ENCODE measurements at regions of chr11 and their contacts with region 1.

Region 1: GRCh38 chr11:47552566-47553416 is at the start of gene CELF1:
- DNase-seq: peak; percentile 87 to 94 (median 92)
- ATAC-seq: peak; percentile 88 to 94
- H3K4me3 Mint-ChIP-seq: peak within 1 kb of the TSS; percentile 94 to 98 (median 96)
- H3K27ac Mint-ChIP-seq: peak within 1 kb of the TSS; percentile 90 to 98 (median 97)
- H3K4me1 Mint-ChIP-seq: peaks cover 17 to 49% (median 43%) of the 10 kb centered on the region in 4 donors
- H3K27me3 Mint-ChIP-seq: no peaks in the 10 kb centered on the region
- polyA plus RNA-seq, gene CELF1: 45.3 to 79.3 (median 55.3) TPM

Region 2: GRCh38 chr11:47415949-47416472 is 136.8 kb before region 1 on chr11:
- POLR2A ChIA-PET with region 1: no interaction called
- DNase-seq: no peak
- ATAC-seq: no peak
- H3K4me3 Mint-ChIP-seq: no peak overlapping the region
- H3K27ac Mint-ChIP-seq: no peak overlapping the region
- H3K4me1 Mint-ChIP-seq: peaks cover 0 to 5% (median 2%) of the 10 kb centered on the region in 4 donors
- H3K27me3 Mint-ChIP-seq: no peaks in the 10 kb centered on the region

Region 3: DNA sequence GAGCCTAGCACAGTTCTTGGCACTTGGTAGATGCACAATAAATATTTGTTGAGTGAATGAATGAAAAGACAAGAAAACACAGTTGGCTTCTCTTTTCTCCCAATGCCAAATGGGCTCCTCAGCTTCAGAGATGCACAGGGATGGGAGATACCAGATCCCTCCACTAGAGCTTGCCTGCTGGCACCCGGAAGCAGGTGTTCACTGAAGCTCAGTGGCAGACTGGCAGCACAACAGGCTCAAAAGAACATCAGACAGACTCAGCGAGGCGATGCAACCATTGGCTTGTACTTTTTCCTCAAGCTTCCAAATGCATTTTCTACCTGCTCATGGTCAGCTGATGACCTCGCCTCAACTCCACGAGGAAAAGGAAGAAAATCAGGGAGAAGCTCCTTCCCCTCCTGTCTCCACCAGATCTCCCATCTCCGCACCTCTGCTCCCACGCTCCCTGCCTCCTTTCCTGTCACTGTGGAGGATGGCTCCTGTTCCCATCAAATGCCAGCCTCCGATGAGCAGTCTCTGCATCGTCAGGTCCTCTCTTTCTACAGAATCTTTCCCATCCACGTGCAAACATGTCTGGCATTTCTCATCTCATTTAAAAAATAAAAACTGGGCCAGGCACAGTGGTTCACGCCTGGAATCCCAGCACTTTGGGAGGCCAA is 109.6 kb before region 1 on chr11:
- POLR2A ChIA-PET with region 1: no interaction called
- DNase-seq: no peak
- ATAC-seq: peak in 1 of 2 donors; percentile 53
- H3K4me3 Mint-ChIP-seq: peak overlapping the region in 3 of 10 donors; percentile 5 to 37 (median 24)
- H3K27ac Mint-ChIP-seq: peak overlapping the region in 4 of 10 donors; percentile 29 to 86 (median 52)
- H3K4me1 Mint-ChIP-seq: peaks cover 0 to 9% (median 4%) of the 10 kb centered on the region in 4 donors
- H3K27me3 Mint-ChIP-seq: no peaks in the 10 kb centered on the region

Region 4: DNA sequence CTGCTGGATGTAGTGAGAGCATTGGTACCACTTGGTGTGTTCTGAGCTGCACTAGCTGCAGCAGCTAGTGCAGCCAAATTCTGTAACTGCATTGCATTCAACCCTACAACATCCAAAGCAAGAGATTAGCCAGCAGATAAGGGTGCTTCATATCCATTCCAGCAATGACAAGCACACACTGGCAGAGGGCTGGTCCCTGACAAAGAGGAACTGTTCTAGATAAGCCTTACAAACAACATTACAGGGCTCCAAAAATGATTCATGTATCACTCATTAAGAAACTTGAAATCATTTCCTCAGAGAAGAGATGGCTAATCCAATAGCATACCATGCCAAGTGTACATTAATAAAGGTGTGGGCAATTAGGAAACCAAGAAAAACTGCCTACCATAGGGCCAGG is 75.5 kb before region 1 on chr11:
- POLR2A ChIA-PET with region 1: no interaction called
- DNase-seq: no peak
- ATAC-seq: no peak
- H3K4me3 Mint-ChIP-seq: no peak overlapping the region
- H3K27ac Mint-ChIP-seq: peak overlapping the region in 5 of 10 donors; percentile 27 to 63 (median 34)
- H3K4me1 Mint-ChIP-seq: peaks cover 0 to 5% (median 1%) of the 10 kb centered on the region in 4 donors
- H3K27me3 Mint-ChIP-seq: no peaks in the 10 kb centered on the region

Region 5: DNA sequence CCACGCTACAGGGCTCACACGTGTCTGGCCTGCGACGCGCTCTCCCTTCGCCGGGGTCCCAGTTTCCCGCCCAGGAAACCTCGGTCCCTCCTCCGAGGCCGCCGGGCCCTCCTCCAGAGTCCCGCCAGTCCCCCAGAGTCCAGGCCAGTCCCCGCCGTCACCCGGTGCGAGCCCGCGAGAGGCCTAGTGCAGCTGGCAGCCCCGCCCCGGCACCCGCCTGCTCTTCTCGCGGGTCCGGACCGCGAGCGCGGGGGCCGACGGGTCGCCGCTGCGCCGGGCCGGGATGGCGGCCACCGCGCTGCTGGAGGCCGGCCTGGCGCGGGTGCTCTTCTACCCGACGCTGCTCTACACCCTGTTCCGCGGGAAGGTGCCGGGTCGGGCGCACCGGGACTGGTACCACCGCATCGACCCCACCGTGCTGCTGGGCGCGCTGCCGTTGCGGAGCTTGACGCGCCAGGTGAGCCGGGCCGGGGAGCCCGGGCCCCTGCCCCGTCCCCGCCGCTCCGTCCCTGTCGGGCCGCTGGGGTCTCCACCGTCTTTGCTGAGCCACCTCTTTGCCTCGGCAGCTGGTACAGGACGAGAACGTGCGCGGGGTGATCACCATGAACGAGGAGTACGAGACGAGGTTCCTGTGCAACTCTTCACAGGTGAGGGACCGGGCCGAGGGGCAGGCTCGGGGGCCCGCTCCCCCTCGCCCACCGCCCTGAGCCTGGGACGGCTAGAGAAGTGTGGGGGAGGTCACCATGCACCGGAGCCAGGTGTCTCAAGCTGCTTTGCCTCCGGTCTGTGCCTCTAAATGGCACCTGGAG is 12.8 kb after region 1 on chr11 and contains the start of gene PTPMT1:
- POLR2A ChIA-PET with region 1: interaction called, 25 read pairs
- DNase-seq: peak; percentile 38 to 78 (median 55)
- ATAC-seq: peak; percentile 88 to 89
- H3K4me3 Mint-ChIP-seq: peak within 1 kb of the TSS; percentile 80 to 90 (median 83)
- H3K27ac Mint-ChIP-seq: peak within 1 kb of the TSS; percentile 57 to 93 (median 86)
- H3K4me1 Mint-ChIP-seq: peaks cover 7 to 39% (median 21%) of the 10 kb centered on the region in 4 donors
- H3K27me3 Mint-ChIP-seq: no peaks in the 10 kb centered on the region
- polyA plus RNA-seq, gene PTPMT1: 58.7 to 73.3 (median 71.0) TPM